Right ventricle myocardium superior (tissue), 1 donor: ENCODE measurements at regions of chr5 and their contacts with region 1.

Region 1: GRCh38 chr5:36414869-36415282 is 113.2 kb upstream of the RANBP3L start:
- DNase-seq: no peak
- ATAC-seq: peak; percentile 68

Region 2: DNA sequence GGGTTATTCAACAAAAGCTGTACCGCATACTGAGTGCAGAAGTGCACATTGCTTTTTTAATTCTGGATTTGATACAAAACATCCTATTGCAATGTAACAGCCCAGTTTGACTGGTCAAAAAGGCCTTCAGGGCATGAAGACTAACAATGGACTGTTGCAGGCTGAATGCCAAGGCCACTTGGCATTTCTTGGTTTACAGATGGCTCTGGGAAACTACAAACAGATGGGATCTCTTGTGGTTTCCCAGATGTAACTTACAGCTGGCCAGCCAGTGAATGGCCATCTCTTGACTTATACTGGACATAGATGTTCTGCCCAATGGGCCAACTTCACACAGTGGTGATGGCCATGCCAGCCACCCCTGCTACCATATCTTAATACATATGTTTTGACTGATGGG is 385.0 kb before region 1 on chr5:
- intact Hi-C with region 1: no loop called
- DNase-seq: no peak
- ATAC-seq: no peak

Region 3: GRCh38 chr5:36507332-36507952 is 92.6 kb after region 1 on chr5:
- intact Hi-C with region 1: loop called (anchors 5 kb)
- DNase-seq: peak; percentile 82
- ATAC-seq: peak; percentile 77

Region 4: DNA sequence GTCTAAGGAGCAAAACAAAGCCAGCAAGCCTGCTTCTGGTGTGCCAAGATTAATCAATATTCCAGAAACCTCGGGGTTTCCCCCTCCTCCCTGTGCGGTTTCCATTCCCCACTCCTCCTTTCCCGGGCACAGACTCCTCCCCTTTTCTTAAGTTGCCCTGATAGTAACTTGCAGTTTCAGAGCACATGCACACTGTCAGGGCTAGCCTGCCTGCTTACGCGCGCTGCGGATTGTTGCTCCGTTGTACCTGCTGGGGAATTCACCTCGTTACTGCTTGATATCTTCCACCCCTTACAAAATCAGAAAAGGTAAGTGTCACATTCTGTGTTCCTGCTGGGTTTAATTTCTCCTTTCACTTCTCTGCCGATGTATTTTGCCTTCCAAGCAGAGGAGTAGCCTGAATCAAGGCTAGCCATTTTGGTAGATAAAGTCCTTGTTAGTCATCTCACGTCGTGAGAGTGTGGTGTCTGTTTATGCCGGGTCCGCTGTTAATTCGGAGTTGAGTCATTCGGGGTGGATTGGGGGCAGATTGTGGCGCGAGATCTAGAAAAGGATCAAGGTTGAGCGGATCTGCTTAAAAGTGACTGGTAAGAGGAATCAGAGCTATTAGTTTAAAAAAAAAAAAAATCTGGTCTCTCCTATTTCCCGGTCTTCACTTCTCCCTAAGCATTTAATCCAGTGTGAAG is 191.7 kb after region 1 on chr5 and contains the start of gene SLC1A3:
- intact Hi-C with region 1: loop called (anchors 10 kb)
- DNase-seq: peak; percentile 66
- ATAC-seq: peak; percentile 87
- total RNA-seq, gene SLC1A3: 93.8 TPM

Region 5: GRCh38 chr5:36690041-36690961 is 275.4 kb after region 1 on chr5:
- intact Hi-C with region 1: loop called (anchors 2 kb)
- DNase-seq: peak; percentile 90
- ATAC-seq: peak; percentile 78